ENCODE measurements at regions of chr10 and their contacts with region 1.

Region 1: DNA sequence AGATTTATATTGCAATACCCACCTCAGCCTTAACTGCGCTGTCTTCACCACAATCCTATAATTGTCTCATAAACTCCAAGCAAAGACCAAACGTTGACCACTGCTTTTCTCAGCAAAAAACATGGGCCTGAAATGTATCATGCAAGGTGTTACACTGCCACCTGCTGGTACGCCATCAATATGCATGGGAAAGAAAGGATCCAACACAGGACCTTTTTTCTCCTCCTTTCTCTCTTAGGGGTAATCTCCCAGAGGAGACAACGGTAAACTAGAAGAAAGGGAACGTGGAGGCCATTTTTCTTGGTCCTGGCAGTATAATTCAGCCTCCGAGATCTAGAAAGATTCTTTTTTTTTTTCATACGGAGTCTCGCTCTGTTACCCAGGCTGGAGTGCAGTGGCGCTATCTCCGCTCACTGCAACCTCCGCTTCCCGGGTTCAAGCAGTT is 79.1 kb upstream of the MPP7 start:
- DNase-seq: peak; percentile 57
- CTCF ChIP-seq: peak; percentile 87

Region 2: GRCh38 chr10:28060031-28060607 is 321.8 kb before region 1 on chr10:
- in situ Hi-C with region 1: no loop called
- DNase-seq: no peak
- CTCF ChIP-seq: no peak

Region 3: DNA sequence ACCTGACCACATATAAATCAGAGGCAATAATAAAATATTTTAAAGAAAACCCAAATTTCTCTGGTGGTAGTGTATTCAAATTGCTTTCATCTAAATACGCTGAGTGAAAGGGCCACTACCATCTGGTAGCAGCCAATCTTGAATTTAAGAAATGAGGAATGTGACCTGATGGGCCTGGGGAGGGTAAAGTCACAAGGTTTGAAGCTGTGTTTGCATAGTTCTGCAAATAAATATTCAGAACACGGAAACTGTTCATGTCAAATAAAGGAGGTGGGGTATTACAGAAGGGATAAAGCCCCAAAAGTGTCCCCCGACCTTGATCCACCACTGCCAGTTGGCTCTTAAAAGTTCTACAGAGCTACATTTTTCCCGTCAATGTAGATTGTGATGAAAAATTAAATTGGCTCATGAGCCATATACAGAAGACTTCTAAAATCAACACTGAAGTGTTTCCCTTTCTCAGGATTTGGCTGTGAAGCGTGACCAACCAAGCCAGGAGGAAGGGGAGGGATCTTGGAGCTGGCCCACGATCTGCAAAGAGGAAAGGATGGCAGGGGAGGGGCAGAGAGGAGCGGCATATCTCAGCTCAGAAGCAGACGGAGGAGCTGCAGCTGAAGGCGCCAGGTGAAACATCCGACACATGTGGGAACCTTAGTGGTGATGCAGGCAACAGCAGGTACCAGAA is 118.6 kb before region 1 on chr10:
- in situ Hi-C with region 1: loop called (anchors 10 kb)
- DNase-seq: no peak
- CTCF ChIP-seq: no peak